MCF 10A (cell line): ENCODE measurements at regions of chr16 and their contacts with region 1.

Region 1: GRCh38 chr16:66650707-66651473 is 45.7 kb downstream of the CMTM4 start:
- DNase-seq: peak; percentile 84
- H3K4me3 Mint-ChIP-seq: peak overlapping the region; percentile 50
- H3K27ac Mint-ChIP-seq: peak overlapping the region; percentile 64
- H3K4me1 Mint-ChIP-seq: peaks cover 39% of the 10 kb centered on the region
- H3K27me3 Mint-ChIP-seq: no peaks in the 10 kb centered on the region
- CTCF ChIP-seq: peak; percentile 90

Region 2: GRCh38 chr16:66580605-66581209 is 70.2 kb before region 1 on chr16:
- CTCF ChIA-PET with region 1: interaction called, 10 read pairs
- POLR2A ChIA-PET with region 1: no interaction called
- intact Hi-C with region 1: no loop called
- DNase-seq: peak; percentile 85
- H3K4me3 Mint-ChIP-seq: no peak overlapping the region
- H3K27ac Mint-ChIP-seq: peak overlapping the region; percentile 32
- H3K4me1 Mint-ChIP-seq: peaks cover 22% of the 10 kb centered on the region
- H3K27me3 Mint-ChIP-seq: no peaks in the 10 kb centered on the region
- CTCF ChIP-seq: no peak

Region 3: GRCh38 chr16:66639091-66639885 is 11.6 kb before region 1 on chr16:
- CTCF ChIA-PET with region 1: interaction called, 59 read pairs
- POLR2A ChIA-PET with region 1: interaction called, 9 read pairs
- intact Hi-C with region 1: no loop called
- DNase-seq: peak; percentile 38
- H3K4me3 Mint-ChIP-seq: peak overlapping the region; percentile 56
- H3K27ac Mint-ChIP-seq: peak overlapping the region; percentile 98
- H3K4me1 Mint-ChIP-seq: peaks cover 18% of the 10 kb centered on the region
- H3K27me3 Mint-ChIP-seq: no peaks in the 10 kb centered on the region
- CTCF ChIP-seq: no peak

Region 4: GRCh38 chr16:66696669-66697630 is 46.1 kb after region 1 on chr16 and contains the start of gene CMTM4:
- CTCF ChIA-PET with region 1: interaction called, 12 read pairs
- POLR2A ChIA-PET with region 1: interaction called, 6 read pairs
- intact Hi-C with region 1: no loop called
- DNase-seq: peak; percentile 89
- H3K4me3 Mint-ChIP-seq: peak within 1 kb of the TSS; percentile 79
- H3K27ac Mint-ChIP-seq: peak within 1 kb of the TSS; percentile 69
- H3K4me1 Mint-ChIP-seq: peaks cover 14% of the 10 kb centered on the region
- H3K27me3 Mint-ChIP-seq: no peaks in the 10 kb centered on the region
- CTCF ChIP-seq: peak; percentile 12
- total RNA-seq, gene CMTM4: 27.2 and 36.7 TPM in 2 replicates

Region 5: GRCh38 chr16:66751303-66751991 is 100.6 kb after region 1 on chr16 and contains the start of gene DYNC1LI2:
- CTCF ChIA-PET with region 1: interaction called, 11 read pairs
- POLR2A ChIA-PET with region 1: no interaction called
- intact Hi-C with region 1: no loop called
- DNase-seq: peak; percentile 63
- H3K4me3 Mint-ChIP-seq: peak within 1 kb of the TSS; percentile 79
- H3K27ac Mint-ChIP-seq: peak within 1 kb of the TSS; percentile 92
- H3K4me1 Mint-ChIP-seq: peaks cover 30% of the 10 kb centered on the region
- H3K27me3 Mint-ChIP-seq: no peaks in the 10 kb centered on the region
- CTCF ChIP-seq: peak; percentile 83
- total RNA-seq, gene DYNC1LI2: 97.7 and 106 TPM in 2 replicates

Region 6: DNA sequence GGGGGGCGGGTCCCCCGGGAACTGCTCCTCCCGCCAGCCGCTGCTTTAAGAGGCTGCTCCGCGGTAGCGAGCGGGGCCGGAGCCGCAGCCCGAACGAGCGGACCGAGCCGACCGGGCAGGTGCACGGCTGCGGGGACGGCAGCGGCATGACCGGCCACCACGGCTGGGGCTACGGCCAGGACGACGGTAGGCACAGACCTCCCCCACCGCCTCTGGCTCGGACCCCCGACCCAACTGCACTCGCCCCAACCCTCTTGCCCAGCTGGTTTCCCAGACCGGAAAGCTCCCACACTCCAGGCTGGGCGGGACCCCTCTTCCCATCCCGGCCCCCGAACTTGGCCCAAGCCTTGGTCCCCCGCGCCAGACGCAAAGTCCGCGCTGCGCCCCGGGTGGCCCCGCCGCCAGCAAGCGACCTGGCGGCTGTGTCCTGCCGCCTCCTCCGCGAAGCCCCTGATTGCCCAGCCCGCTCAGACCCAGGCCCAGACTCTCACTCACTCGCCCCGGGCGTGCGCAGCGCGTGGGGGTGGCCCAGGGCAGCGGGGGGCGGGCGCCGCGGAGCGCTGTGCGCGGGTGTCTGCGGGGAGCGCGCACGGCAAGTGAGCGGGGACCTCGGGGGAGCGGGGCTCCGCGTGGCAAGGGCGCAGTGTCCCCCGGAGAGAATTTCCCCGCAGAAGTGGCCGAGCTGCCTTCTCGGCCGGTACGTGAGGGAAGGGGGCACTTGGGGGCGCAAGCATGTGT is 193.6 kb after region 1 on chr16 and contains the start of gene CA7:
- CTCF ChIA-PET with region 1: no interaction called
- POLR2A ChIA-PET with region 1: no interaction called
- intact Hi-C with region 1: no loop called
- DNase-seq: no peak
- H3K4me3 Mint-ChIP-seq: no peak within 1 kb of the TSS
- H3K27ac Mint-ChIP-seq: no peak within 1 kb of the TSS
- H3K4me1 Mint-ChIP-seq: peaks cover 7% of the 10 kb centered on the region
- H3K27me3 Mint-ChIP-seq: peaks cover 11% of the 10 kb centered on the region
- CTCF ChIP-seq: no peak
- total RNA-seq, gene CA7: not detected in 2 replicates